Posterior cingulate gyrus (tissue), 11 donors: ENCODE measurements at regions of chr3 and their contacts with region 1.

Region 1: DNA sequence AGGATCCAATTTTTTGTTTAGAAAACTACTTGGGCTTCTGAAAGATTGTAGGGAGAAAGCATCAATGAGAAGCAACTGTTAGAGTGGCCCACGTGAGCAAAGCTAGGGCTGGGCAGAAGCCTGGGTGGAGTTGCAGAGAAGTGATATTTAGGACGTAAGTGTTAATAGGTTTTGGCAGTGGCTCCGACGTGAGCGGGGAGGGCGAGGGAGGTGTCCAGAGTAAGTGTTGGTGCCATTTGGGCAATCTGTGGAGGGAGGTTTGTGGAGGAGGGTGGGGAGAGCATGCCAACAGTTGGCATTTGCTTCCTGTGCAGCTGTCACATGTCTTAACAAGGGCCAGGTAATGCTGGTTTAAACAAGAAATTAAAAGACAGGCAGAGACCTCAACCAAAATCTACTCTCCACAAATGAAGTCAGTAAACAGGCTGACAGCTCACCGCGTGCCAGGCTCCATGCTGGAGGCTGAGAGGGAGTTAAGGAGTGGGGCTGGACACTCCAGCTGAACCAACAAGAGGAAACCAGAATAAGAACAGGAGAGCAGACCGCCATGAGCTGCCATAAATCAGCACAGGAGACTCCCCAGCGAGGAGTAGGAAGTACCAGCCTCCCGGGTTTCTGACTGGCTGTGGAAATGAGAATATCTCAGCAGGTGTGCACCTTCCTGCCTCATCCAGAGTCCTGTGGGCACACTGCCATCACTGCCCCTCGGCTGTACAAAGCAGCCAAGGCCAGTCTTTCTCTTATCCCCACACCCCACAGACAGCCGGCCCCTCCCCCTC is 232.6 kb downstream of the ABHD5 start:
- DNase-seq: peak in 8 of 10 donors; percentile 24 to 89 (median 56)

Region 2: DNA sequence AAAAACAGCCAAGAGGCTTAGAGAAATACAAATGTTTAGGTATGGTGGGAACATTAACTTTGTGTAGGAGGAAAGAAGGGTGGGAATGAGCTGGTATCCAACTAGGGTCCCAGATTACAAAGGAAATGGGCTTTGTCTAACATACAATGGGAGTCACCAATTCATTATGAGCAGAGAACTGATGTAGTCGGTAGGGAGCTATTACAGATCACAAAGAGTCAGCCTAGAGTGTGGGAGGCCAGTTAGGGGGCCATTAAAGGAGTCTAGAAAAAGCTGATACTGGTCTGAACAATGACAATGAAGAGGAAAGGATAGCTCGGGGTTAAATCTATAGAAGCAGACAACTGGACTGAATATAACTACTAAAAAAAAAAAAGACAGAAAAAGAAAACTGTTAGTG is 317.0 kb before region 1 on chr3:
- intact Hi-C with region 1: no loop called
- DNase-seq: no peak

Region 3: GRCh38 chr3:43995078-43995928 is 72.0 kb after region 1 on chr3:
- intact Hi-C with region 1: loop called (anchors 2 kb)
- DNase-seq: peak in 7 of 10 donors; percentile 43 to 95 (median 70)